ENCODE measurements at regions of chr20 and their contacts with region 1.

Region 1: GRCh38 chr20:38645980-38646858 is 44.6 kb downstream of the ARHGAP40 start:
- DNase-seq: peak; percentile 78 to 83 (median 82)
- ATAC-seq: peak; percentile 89 to 98 (median 94)
- H3K4me3 ChIP-seq: peak overlapping the region in 1 of 3 donors; percentile 4
- H3K27ac ChIP-seq: no peak overlapping the region
- H3K4me1 ChIP-seq: peaks cover 0 to 7% (median 0%) of the 10 kb centered on the region in 4 donors
- H3K27me3 ChIP-seq: peaks cover 0 to 6% of the 10 kb centered on the region in 2 donors
- CTCF ChIP-seq: peak; percentile 93 to 99 (median 96)
- POLR2A ChIP-seq: no peak

Region 2: GRCh38 chr20:38730989-38731737 is 84.9 kb after region 1 on chr20:
- intact Hi-C with region 1: loop called in 1 of 2 experiments (anchors 10 kb)
- DNase-seq: peak; percentile 65 to 78 (median 76)
- ATAC-seq: peak; percentile 76 to 92 (median 88)
- H3K4me3 ChIP-seq: peak overlapping the region in 2 of 3 donors; percentile 0 to 6
- H3K27ac ChIP-seq: no peak overlapping the region
- H3K4me1 ChIP-seq: peaks cover 0 to 10% (median 0%) of the 10 kb centered on the region in 4 donors
- H3K27me3 ChIP-seq: peaks cover 4 to 51% of the 10 kb centered on the region in 2 donors
- CTCF ChIP-seq: peak; percentile 75 to 98 (median 96)
- POLR2A ChIP-seq: no peak

Region 3: DNA sequence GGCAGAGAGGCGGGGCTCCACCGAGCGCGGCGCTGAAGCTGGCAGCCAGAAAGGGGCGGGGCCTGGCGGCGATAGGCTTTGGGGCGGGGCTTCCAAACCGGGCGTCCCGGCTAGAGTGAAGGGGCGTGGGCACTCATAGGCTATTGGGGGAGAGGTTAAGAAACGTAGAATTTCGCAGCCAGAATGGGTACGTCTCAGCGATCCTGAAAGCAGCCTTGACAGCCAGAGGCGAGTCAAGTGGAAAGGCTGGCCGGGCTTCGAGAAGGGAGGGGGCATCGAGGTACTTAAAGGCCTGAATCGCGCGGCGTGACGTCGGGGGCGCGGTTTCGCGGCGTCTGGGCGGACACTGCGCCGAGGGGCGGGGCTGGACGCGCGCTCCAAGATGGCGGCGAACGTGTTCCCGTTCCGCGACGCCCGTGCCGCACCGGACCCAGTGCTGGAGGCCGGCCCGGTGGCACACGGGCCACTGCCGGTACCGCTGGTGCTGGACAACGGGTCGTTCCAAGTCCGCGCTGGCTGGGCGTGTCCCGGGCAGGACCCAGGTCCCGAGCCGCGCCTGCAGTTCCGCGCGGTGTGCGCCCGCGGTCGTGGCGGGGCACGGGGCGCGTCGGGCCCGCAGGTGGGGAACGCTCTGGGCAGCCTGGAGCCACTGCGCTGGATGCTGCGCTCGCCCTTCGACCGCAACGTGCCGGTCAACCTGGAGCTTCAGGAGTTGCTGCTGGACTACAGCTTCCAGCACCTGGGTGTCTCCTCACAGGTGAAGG is 102.1 kb after region 1 on chr20 and contains the start of gene ACTR5:
- intact Hi-C with region 1: loop called in 1 of 2 experiments (anchors 5 kb)
- DNase-seq: peak; percentile 96
- ATAC-seq: peak; percentile 97 to 98 (median 98)
- H3K4me3 ChIP-seq: peak within 1 kb of the TSS; percentile 84 to 99 (median 92)
- H3K27ac ChIP-seq: peak within 1 kb of the TSS; percentile 56 to 74 (median 62)
- H3K4me1 ChIP-seq: peaks cover 0 to 11% (median 0%) of the 10 kb centered on the region in 4 donors
- H3K27me3 ChIP-seq: no peaks in the 10 kb centered on the region
- CTCF ChIP-seq: no peak
- POLR2A ChIP-seq: peak; percentile 57
- total RNA-seq, gene ACTR5: 3.0 to 5.6 (median 3.7) TPM